ENCODE measurements at regions of chr6 and their contacts with region 1.

Region 1: DNA sequence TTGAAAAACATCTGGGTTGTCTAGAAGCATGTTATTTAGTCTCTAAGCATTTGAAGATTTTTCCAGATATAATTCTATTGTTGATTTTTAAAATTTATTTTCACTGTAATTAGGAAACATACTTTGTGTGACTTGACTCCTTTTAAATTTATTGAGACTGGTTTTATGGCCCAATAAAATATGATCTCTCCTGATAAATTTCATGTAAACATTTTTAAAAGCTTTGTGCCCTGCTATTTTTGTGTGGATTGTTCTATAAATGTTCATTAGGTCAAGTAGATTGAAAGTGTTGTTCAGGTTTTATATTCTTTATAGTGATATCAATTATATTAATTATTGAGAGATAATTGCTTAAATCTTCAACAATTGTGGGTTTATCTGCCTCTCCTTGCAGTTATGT is 105.4 kb downstream of the RFX6 start:
- DNase-seq: no peak
- H3K4me3 ChIP-seq: no peak overlapping the region
- H3K27ac ChIP-seq: no peak overlapping the region
- H3K4me1 ChIP-seq: no peaks in the 10 kb centered on the region
- H3K27me3 ChIP-seq: peaks cover 3% of the 10 kb centered on the region
- CTCF ChIP-seq: no peak

Region 2: GRCh38 chr6:116933485-116933884 is 48.9 kb before region 1 on chr6:
- CTCF ChIA-PET with region 1: no interaction called
- dilution Hi-C with region 1: loop called (anchors 5 kb)
- in situ Hi-C with region 1: no loop called
- intact Hi-C with region 1: no loop called
- DNase-seq: no peak
- H3K4me3 ChIP-seq: no peak overlapping the region
- H3K27ac ChIP-seq: no peak overlapping the region
- H3K4me1 ChIP-seq: no peaks in the 10 kb centered on the region
- H3K27me3 ChIP-seq: peaks cover 4% of the 10 kb centered on the region
- CTCF ChIP-seq: no peak

Region 3: DNA sequence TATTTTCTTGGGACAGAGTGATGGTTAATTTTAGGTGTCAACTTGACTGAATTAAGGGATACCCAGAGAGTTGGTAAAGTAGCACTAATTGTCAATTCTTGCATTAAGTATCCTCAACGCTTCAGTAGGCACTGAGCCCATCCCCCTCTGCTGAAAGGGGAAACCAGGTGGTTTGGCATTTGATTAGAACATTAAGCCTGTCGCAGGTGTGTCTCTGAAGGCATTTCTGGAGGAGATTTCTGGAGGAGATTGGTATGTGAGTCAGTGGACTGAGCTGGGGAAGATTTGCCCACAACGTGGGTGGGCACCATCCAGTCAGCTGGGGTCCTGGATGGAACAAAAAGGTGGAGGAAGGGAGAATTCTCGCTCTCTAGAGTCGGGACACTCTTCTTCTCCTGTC is 14.4 kb after region 1 on chr6:
- CTCF ChIA-PET with region 1: no interaction called
- dilution Hi-C with region 1: no loop called
- in situ Hi-C with region 1: no loop called
- intact Hi-C with region 1: no loop called
- DNase-seq: no peak
- H3K4me3 ChIP-seq: no peak overlapping the region
- H3K27ac ChIP-seq: no peak overlapping the region
- H3K4me1 ChIP-seq: no peaks in the 10 kb centered on the region
- H3K27me3 ChIP-seq: peaks cover 2% of the 10 kb centered on the region
- CTCF ChIP-seq: no peak

Region 4: GRCh38 chr6:117126213-117126612 is 143.8 kb after region 1 on chr6:
- CTCF ChIA-PET with region 1: no interaction called
- dilution Hi-C with region 1: no loop called
- in situ Hi-C with region 1: no loop called
- intact Hi-C with region 1: no loop called
- DNase-seq: no peak
- H3K4me3 ChIP-seq: no peak overlapping the region
- H3K27ac ChIP-seq: no peak overlapping the region
- H3K4me1 ChIP-seq: no peaks in the 10 kb centered on the region
- H3K27me3 ChIP-seq: no peaks in the 10 kb centered on the region
- CTCF ChIP-seq: no peak

Measured in mammary epithelial cell (primary cell).